Psoas muscle (tissue), 8 donors: ENCODE measurements at regions of chr6 and their contacts with region 1.

Region 1: GRCh38 chr6:149934249-149935156 is 7.3 kb upstream of the ULBP2 start:
- DNase-seq: peak in 1 of 2 donors; percentile 38
- ATAC-seq: peak; percentile 71 to 83 (median 75)
- H3K4me3 ChIP-seq: no peak overlapping the region
- H3K27ac ChIP-seq: no peak overlapping the region
- H3K4me1 ChIP-seq: no peaks in the 10 kb centered on the region
- H3K27me3 ChIP-seq: peaks cover 7 to 60% (median 26%) of the 10 kb centered on the region in 3 donors
- CTCF ChIP-seq: peak; percentile 90

Region 2: DNA sequence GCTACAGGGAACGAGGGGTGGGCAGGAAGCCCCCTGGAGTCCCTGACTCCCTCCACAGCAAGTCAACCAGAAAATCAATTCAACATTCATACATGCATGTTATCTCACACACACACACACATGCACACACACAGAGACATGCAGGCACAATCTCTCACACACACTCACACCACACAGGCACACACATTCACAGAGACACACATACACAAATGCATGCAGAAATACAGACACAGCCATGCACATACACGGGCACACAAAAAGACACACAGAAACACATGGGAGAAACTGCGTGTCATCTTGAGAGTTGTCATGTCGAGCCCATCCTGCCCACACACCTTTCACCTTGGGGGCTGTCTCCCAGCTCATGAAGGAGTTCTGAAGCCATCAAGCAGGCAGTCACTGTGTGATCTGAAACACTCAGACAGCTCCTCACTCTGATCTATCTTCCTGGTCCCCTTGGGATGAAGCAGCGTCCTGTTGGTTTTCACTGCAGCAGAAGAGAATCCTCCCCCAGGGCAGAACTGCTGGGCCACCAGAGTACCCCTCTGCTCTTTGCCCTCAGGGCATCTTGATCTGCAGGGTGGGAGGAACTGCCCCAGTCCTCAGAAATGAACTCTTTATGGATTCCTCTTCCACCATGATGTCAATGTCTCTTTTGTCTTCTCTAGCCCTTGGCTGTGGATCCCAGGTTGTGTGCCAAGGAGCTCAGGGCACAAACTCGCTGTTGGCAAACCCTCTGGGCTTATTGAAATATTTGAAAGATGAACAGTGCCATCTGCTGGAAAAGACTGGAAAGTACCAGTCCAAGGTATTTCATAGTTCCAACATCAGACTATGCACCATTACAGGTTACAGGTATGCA is 82.1 kb after region 1 on chr6:
- intact Hi-C with region 1: loop called (anchors 1 to 2 kb)
- DNase-seq: no peak
- ATAC-seq: peak; percentile 78 to 91 (median 90)
- H3K4me3 ChIP-seq: no peak overlapping the region
- H3K27ac ChIP-seq: no peak overlapping the region
- H3K4me1 ChIP-seq: no peaks in the 10 kb centered on the region
- H3K27me3 ChIP-seq: peaks cover 0 to 55% (median 14%) of the 10 kb centered on the region in 3 donors
- CTCF ChIP-seq: peak; percentile 74

Region 3: GRCh38 chr6:150403458-150404246 is 469.1 kb after region 1 on chr6:
- intact Hi-C with region 1: loop called in 1 of 2 experiments (anchors 5 kb)
- DNase-seq: no peak
- ATAC-seq: peak; percentile 27 to 65 (median 49)
- H3K4me3 ChIP-seq: no peak overlapping the region
- H3K27ac ChIP-seq: no peak overlapping the region
- H3K4me1 ChIP-seq: no peaks in the 10 kb centered on the region
- H3K27me3 ChIP-seq: no peaks in the 10 kb centered on the region
- CTCF ChIP-seq: no peak